Body of pancreas (tissue), 4 donors: ENCODE measurements at regions of chr1 and their contacts with region 1.

Region 1: DNA sequence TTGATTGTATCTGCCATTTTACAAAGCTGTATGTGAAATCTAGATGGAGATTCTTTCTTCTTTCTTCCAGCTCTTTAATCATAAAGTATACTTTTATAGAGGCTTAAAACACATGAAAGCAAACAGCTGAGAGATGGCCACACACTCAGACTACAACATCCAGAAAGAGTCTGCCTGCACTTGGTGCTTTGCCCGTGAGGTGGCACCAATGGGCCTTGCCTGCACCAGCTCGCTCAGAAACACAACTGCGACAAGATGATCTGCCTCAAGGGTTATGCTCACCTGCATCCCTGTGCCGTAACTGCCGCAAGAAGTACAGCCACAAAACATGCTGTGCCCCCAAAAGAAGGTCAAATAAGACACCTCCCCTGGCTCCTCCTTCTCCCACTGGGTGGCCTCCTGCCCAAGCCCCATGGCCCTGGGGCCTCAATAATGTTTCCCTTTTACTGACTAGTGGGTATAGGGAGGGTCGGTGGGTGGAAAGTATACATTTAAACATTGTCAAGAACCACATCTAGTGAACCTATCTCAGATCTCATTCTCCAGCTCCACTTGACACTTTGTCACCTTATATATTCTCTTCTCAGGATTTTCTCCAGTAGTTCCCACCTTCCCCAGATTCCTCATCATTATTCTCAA is 66.7 kb upstream of the ANGPTL3 start:
- DNase-seq: peak; percentile 61 to 78 (median 70)
- ATAC-seq: peak; percentile 64
- H3K4me3 ChIP-seq: no peak overlapping the region
- H3K27ac ChIP-seq: no peak overlapping the region
- H3K4me1 ChIP-seq: no peaks in the 10 kb centered on the region
- H3K27me3 ChIP-seq: no peaks in the 10 kb centered on the region
- CTCF ChIP-seq: peak; percentile 56 to 81 (median 69)
- POLR2A ChIP-seq: no peak

Region 2: DNA sequence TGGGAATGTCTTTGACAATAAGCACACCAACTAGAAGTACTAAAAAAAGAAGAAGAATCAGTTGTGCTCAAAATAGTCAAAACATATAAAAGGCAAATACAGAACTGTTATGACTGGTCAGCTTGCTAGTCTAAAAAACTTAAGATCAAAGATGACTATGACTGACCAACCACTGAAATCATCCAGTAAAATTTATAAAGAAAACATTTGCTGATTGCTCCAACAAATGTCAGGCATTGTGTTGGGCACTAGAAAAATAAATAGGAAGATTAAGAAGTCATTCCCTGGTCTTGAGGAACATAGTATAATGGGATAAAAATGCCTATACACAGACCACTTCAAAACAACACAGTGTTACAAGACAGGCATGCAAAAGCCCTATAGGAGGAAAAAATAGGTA is 57.4 kb after region 1 on chr1:
- intact Hi-C with region 1: no loop called
- DNase-seq: no peak
- ATAC-seq: no peak
- H3K4me3 ChIP-seq: no peak overlapping the region
- H3K27ac ChIP-seq: no peak overlapping the region
- H3K4me1 ChIP-seq: peaks cover 9% of the 10 kb centered on the region
- H3K27me3 ChIP-seq: no peaks in the 10 kb centered on the region
- CTCF ChIP-seq: no peak
- POLR2A ChIP-seq: no peak

Region 3: GRCh38 chr1:62746085-62746808 is 215.6 kb after region 1 on chr1:
- intact Hi-C with region 1: loop called (anchors 10 kb)
- DNase-seq: no peak
- ATAC-seq: peak; percentile 45
- H3K4me3 ChIP-seq: no peak overlapping the region
- H3K27ac ChIP-seq: no peak overlapping the region
- H3K4me1 ChIP-seq: no peaks in the 10 kb centered on the region
- H3K27me3 ChIP-seq: no peaks in the 10 kb centered on the region
- CTCF ChIP-seq: peak; percentile 30 to 82 (median 72)
- POLR2A ChIP-seq: no peak